Naive thymus-derived CD4-positive, alpha-beta T cell (primary cell): ENCODE measurements at regions of chr10 and their contacts with region 1.

Region 1: DNA sequence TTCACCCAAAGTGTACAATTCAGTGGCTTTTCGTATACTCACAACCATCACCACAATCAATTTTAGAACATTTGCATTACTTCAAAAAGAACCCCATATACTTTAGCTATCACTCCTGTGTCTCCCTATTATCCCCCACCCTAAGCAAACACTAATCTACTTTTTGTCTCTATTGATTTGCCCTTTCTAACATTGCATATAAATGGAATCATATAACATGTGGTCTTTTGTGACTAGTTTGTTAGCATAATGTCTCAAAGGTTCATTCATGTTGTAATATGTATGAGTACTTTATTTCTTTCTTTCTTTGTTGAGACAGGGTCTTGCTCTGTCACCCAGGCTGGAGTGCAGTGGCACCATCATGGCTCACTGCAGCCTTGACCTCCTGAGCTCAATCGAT is 21.0 kb upstream of the DNAJC12 start:
- DNase-seq: no peak
- ATAC-seq: no peak
- H3K4me3 ChIP-seq: no peak overlapping the region
- H3K4me3 Mint-ChIP-seq: no peak overlapping the region
- H3K27ac ChIP-seq: no peak overlapping the region
- H3K27ac Mint-ChIP-seq: no peak overlapping the region
- H3K4me1 ChIP-seq: no peaks in the 10 kb centered on the region
- H3K4me1 Mint-ChIP-seq: peaks cover 0 to 12% (median 5%) of the 10 kb centered on the region in 7 donors
- H3K27me3 ChIP-seq: no peaks in the 10 kb centered on the region
- H3K27me3 Mint-ChIP-seq: peaks cover 0 to 5% (median 0%) of the 10 kb centered on the region in 5 donors

Region 2: GRCh38 chr10:67912339-67912946 is 53.5 kb after region 1 on chr10:
- CTCF ChIA-PET with region 1: interaction called, 3 read pairs
- POLR2A ChIA-PET with region 1: no interaction called
- intact Hi-C with region 1: loop called in 1 of 2 experiments (anchors 5 kb)
- DNase-seq: no peak
- ATAC-seq: no peak
- H3K4me3 ChIP-seq: no peak overlapping the region
- H3K4me3 Mint-ChIP-seq: no peak overlapping the region
- H3K27ac ChIP-seq: no peak overlapping the region
- H3K27ac Mint-ChIP-seq: peak overlapping the region; percentile 6 to 69 (median 36)
- H3K4me1 ChIP-seq: no peaks in the 10 kb centered on the region
- H3K4me1 Mint-ChIP-seq: peaks cover 14 to 47% (median 27%) of the 10 kb centered on the region in 7 donors
- H3K27me3 ChIP-seq: no peaks in the 10 kb centered on the region
- H3K27me3 Mint-ChIP-seq: no peaks in the 10 kb centered on the region